Naive thymus-derived CD4-positive, alpha-beta T cell (primary cell): ENCODE measurements at regions of chr6 and their contacts with region 1.

Region 1: GRCh38 chr6:145814501-145815308 is at the start of gene FBXO30:
- DNase-seq: peak; percentile 81 to 94 (median 88)
- ATAC-seq: peak; percentile 98
- H3K4me3 ChIP-seq: peak within 1 kb of the TSS; percentile 92
- H3K4me3 Mint-ChIP-seq: peak within 1 kb of the TSS; percentile 91 to 96 (median 94)
- H3K27ac ChIP-seq: peak within 1 kb of the TSS; percentile 80
- H3K27ac Mint-ChIP-seq: peak within 1 kb of the TSS; percentile 83 to 96 (median 95)
- H3K4me1 ChIP-seq: peaks cover 0 to 18% of the 10 kb centered on the region in 2 donors
- H3K4me1 Mint-ChIP-seq: peaks cover 25 to 50% (median 41%) of the 10 kb centered on the region in 7 donors
- H3K27me3 ChIP-seq: no peaks in the 10 kb centered on the region
- H3K27me3 Mint-ChIP-seq: peaks cover 0 to 3% (median 0%) of the 10 kb centered on the region in 5 donors
- total RNA-seq, gene FBXO30: 1.6 to 5.1 (median 4.8) TPM

Region 2: DNA sequence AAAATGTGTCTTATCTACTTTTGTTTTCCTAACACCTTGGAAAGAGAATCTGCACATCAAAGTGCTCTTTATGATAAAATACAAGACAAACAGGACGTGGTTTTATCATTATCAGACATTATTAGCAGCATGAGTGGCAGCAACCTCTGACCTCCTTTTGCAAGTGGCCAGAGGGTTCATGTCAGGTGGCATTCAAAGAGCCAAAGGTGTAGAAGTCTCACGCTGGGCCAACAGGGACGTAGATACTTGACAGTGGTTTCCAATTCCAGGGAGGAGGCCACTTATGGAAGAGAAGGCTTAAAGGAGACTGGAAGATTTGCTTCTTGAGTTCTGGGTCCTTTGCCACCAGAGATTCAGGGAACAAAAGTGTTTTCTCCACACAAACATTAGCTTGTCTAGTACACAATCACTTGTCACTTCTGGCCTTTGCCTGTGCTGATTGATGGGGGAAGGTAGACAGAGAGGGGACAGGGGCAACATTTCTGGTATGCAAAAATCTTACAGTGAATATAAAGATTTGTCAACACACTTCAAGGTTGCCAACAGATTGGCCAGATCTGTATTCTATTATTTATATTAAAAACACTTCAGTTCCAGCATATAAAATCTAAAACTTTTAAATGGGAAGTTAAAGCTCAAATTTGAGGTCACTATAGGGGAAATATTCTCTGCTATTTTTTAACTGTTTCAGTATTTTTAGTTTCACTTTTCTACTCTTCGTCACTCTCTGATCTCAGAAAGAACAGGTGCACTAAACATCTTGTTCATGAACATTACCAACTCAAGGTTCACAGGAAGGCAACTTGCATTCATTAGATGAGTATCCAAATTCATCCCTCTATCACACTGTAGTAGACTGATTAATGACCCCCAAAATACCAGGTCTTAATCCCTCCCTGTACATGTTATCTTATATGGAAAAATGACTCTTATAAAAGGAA is 52.0 kb after region 1 on chr6:
- CTCF ChIA-PET with region 1: no interaction called
- POLR2A ChIA-PET with region 1: interaction called, 5 read pairs
- intact Hi-C with region 1: loop called (anchors 2 to 5 kb)
- DNase-seq: peak in 3 of 9 donors; percentile 3 to 9 (median 9)
- ATAC-seq: peak; percentile 50
- H3K4me3 ChIP-seq: no peak overlapping the region
- H3K4me3 Mint-ChIP-seq: peak overlapping the region in 9 of 10 donors; percentile 20 to 73 (median 57)
- H3K27ac ChIP-seq: peak overlapping the region; percentile 39
- H3K27ac Mint-ChIP-seq: peak overlapping the region; percentile 48 to 89 (median 71)
- H3K4me1 ChIP-seq: peaks cover 17 to 29% of the 10 kb centered on the region in 2 donors
- H3K4me1 Mint-ChIP-seq: peaks cover 19 to 37% (median 31%) of the 10 kb centered on the region in 7 donors
- H3K27me3 ChIP-seq: no peaks in the 10 kb centered on the region
- H3K27me3 Mint-ChIP-seq: no peaks in the 10 kb centered on the region